MCF 10A (cell line): ENCODE measurements at regions of chr16 and their contacts with region 1.

Region 1: GRCh38 chr16:67833418-67834241 is 8.5 kb upstream of the THAP11 start:
- DNase-seq: peak; percentile 87
- H3K4me3 Mint-ChIP-seq: peak overlapping the region; percentile 93
- H3K27ac Mint-ChIP-seq: peak overlapping the region; percentile 91
- H3K4me1 Mint-ChIP-seq: peaks cover 9% of the 10 kb centered on the region
- H3K27me3 Mint-ChIP-seq: no peaks in the 10 kb centered on the region
- CTCF ChIP-seq: no peak

Region 2: DNA sequence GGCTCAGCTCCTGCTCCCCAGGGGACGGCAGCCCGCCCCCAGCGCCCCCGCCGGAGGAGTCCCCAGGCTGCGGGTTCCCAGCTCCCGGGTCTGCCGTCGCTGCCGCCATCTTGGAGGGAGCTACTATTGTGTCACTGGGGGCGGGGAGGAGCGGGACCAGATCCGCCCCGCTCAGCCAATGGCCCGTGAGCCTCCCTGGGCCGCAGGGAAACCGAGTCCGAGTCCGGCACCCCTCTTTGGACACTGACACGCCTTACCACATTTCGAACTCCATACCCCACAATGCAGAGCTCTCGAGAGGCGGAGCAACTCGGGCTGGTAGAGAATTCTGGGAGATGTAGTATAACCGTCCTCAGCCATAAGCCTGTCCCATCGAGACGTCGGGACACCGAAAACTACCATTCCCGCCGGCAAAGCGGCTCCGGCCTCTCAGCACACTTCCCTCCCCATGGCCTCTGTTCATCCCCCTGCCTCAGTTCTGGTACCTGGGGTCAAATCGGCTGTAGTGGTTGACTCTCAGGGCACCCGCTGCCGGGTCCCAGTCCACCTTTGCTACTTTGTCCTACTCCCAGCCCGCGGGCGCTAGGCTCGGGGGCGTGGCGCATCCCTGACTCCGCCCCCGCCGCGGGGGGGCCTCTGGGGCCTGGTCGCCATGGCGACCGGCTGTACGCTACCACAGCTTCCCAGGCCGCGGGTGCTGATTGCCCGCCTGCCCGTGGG is 27.0 kb before region 1 on chr16 and contains the starts of genes RANBP10 and TSNAXIP1:
- CTCF ChIA-PET with region 1: interaction called, 5 read pairs
- POLR2A ChIA-PET with region 1: interaction called, 10 read pairs
- intact Hi-C with region 1: no loop called
- DNase-seq: peak; percentile 99
- H3K4me3 Mint-ChIP-seq: peak within 1 kb of the TSS; percentile 90
- H3K27ac Mint-ChIP-seq: peak within 1 kb of the TSS; percentile 89
- H3K4me1 Mint-ChIP-seq: peaks cover 5% of the 10 kb centered on the region
- H3K27me3 Mint-ChIP-seq: no peaks in the 10 kb centered on the region
- CTCF ChIP-seq: no peak
- total RNA-seq, gene RANBP10: 17.2 and 21.7 TPM in 2 replicates
- total RNA-seq, gene TSNAXIP1: 1.1 and 1.5 TPM in 2 replicates

Region 3: GRCh38 chr16:67928561-67929364 is 95.1 kb after region 1 on chr16:
- CTCF ChIA-PET with region 1: interaction called, 4 read pairs
- POLR2A ChIA-PET with region 1: no interaction called
- intact Hi-C with region 1: loop called (anchors 5 kb)
- DNase-seq: peak; percentile 75
- H3K4me3 Mint-ChIP-seq: no peak overlapping the region
- H3K27ac Mint-ChIP-seq: no peak overlapping the region
- H3K4me1 Mint-ChIP-seq: peaks cover under 1% of the 10 kb centered on the region
- H3K27me3 Mint-ChIP-seq: no peaks in the 10 kb centered on the region
- CTCF ChIP-seq: peak; percentile 86

Region 4: DNA sequence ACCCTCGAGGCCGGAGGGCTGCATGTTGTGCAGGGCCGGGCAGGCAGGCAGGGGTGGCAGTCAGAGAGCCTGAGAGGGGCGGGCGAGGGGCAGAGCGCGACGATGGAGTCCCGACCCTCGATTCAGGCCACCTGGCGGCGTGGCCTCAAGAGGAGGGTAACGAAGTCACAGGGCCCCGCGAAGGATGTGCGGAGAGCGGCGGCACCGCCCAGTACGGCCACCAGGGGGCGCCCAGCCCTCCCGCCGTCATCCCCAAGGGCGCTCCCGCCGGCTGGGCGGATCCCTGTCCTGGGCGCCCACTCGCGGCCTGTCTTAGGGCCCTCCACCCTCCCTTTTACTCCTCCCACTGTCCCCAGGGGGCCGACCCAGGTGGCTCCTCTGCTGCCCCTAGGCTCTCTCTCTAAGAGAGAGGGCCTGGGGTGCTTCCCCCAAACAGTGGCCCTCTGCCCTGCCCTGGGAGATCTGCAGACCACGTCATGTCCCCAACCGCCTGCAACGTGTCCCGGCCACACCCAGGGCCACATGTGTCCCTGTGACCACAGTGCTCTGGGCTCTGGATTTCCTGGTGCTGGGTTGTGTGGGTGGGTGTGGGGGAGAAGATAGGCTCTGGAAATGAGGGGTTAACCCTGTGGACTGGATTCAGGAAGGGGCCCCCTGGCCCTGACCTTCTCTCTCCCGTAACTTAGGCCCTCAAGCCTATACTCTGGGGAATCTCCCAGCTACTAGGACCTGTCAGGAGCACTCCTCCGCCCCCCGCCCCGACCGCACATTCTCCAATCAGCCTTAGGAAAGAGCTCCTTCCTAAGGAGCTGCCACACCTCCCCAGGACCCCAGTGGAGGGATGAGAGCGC is 159.8 kb after region 1 on chr16:
- CTCF ChIA-PET with region 1: no interaction called
- POLR2A ChIA-PET with region 1: no interaction called
- intact Hi-C with region 1: no loop called
- DNase-seq: peak; percentile 62
- H3K4me3 Mint-ChIP-seq: peak overlapping the region; percentile 53
- H3K27ac Mint-ChIP-seq: peak overlapping the region; percentile 82
- H3K4me1 Mint-ChIP-seq: no peaks in the 10 kb centered on the region
- H3K27me3 Mint-ChIP-seq: no peaks in the 10 kb centered on the region
- CTCF ChIP-seq: peak; percentile 98